ENCODE measurements at regions of chr12 and their contacts with region 1.

Region 1: DNA sequence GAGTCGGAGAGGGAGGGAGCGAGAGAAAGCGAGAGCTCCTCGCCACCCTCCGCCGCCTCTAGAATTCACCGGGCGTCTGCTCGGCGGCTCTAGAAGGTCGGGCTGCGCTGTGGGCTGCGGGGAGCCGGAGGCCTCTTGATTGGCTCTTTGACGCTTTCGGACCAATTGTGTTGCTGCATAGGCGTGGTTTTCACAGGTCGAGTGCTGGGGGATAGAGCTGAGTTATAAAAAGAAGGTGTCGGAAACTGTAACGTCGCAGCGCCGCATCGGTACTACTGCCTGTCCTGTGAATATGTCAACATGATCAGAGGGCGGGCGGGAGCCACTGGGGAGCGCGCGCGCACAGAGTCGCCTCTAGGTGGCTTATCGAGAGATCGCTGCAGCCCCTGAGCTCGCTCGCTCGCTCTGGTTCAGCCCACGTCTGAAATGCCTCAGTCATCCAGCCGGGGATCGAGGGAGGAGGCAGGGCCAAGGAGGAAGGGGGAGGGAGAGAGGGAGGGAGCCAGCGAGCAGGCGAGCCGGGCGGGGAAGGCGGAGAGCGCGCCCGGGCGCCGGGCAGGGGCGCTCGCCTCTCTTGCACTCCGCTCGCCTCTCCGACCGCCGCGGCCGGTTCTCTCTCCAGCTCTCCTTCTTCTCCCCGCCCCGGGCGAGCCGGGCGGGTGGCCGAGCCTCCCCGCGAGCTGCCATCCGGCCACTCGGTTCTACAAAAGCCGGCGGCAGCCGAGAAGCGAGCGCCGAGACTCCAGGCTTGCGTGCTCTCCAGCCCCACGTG is at the start of gene TBX3:
- DNase-seq: peak; percentile 98
- H3K4me3 ChIP-seq: peak within 1 kb of the TSS; percentile 96
- H3K27ac ChIP-seq: peak within 1 kb of the TSS; percentile 98
- H3K27me3 ChIP-seq: no peaks in the 10 kb centered on the region
- CTCF ChIP-seq: peak; percentile 63
- polyA plus RNA-seq, gene TBX3: 42.2 and 54.8 TPM in 2 replicates

Region 2: DNA sequence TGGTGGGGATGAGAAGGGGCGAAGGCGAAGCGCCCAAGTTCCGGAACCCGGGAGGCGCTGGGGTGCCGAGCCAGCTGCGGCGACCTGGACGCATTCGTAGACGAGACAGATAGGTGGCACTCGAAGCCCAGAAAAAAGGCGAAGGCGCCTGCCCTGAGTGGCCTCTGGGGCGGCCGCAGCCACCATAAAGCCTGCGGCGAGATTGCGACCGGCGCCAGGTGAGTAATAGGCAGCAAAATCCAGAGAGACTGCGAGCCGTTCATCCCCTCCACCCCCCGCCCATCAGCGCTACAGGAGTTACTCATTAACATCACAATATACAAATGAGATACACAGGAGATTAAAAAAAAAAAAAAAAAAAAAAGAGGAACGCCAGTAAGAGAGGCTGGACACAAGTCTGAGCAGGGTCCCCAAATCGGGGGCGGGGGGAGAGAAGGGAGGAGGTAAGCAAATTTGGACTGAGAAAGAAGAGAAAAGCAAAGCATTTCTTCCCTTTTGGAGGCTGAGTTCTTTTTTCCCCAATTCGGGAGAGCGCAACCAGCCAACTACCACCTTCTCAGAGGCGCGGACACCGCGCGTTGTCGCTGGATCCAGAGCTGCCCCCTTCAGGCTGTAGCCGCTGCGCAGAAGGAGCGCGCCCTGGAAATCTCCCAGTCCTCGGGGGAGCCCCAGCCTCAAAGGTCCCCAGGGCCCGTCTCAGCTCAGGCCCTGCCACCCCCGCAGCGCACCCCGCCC is 16.0 kb before region 1 on chr12:
- CTCF ChIA-PET with region 1: interaction called, 12 read pairs
- POLR2A ChIA-PET with region 1: interaction called, 138 read pairs
- DNase-seq: no peak
- H3K4me3 ChIP-seq: peak overlapping the region; percentile 59
- H3K27ac ChIP-seq: peak overlapping the region; percentile 95
- H3K27me3 ChIP-seq: no peaks in the 10 kb centered on the region
- CTCF ChIP-seq: peak; percentile 55

Region 3: GRCh38 chr12:114762490-114763110 is 78.3 kb after region 1 on chr12:
- CTCF ChIA-PET with region 1: interaction called, 4 read pairs
- POLR2A ChIA-PET with region 1: interaction called, 15 read pairs
- DNase-seq: peak; percentile 76
- H3K4me3 ChIP-seq: peak overlapping the region; percentile 25
- H3K27ac ChIP-seq: peak overlapping the region; percentile 49
- H3K27me3 ChIP-seq: no peaks in the 10 kb centered on the region
- CTCF ChIP-seq: no peak

Region 4: GRCh38 chr12:114812858-114813761 is 128.8 kb after region 1 on chr12:
- CTCF ChIA-PET with region 1: no interaction called
- POLR2A ChIA-PET with region 1: interaction called, 23 read pairs
- DNase-seq: peak; percentile 56
- H3K4me3 ChIP-seq: peak overlapping the region; percentile 31
- H3K27ac ChIP-seq: peak overlapping the region; percentile 83
- H3K27me3 ChIP-seq: no peaks in the 10 kb centered on the region
- CTCF ChIP-seq: no peak

Region 5: DNA sequence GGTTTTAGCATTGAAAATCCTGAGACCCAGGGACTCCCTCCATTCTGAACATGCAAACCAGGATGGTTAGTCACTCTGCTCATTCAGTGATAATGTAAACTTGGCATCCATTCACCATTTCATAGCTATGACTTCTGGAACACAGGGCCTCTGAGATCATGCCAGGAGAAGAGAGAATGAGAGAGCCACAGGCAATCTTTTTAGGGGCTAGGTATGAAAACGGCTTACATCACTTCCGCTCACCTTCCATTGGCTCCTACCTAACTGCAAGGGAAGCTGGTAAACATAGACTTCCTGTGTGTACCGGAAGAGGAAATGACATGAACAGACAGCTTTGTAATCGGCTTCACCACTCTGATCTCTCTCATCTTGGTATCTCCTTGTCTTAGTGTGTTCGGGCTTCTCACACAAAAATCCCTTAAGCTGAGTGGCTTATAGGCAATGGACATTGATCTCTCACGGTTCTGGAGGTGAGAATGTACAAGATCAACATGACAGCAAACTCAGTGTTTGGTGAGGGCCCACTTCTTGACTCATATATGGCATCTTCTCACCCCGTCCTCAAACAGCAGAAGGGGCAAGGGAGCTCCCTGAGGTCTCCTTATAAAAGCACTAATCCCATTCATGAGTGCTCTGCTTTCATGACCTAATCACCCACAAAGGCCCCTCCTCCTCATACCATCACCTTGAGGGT is 465.5 kb after region 1 on chr12:
- CTCF ChIA-PET with region 1: interaction called, 6 read pairs
- POLR2A ChIA-PET with region 1: interaction called, 15 read pairs
- DNase-seq: peak; percentile 95
- H3K4me3 ChIP-seq: no peak overlapping the region
- H3K27ac ChIP-seq: peak overlapping the region; percentile 97
- H3K27me3 ChIP-seq: no peaks in the 10 kb centered on the region
- CTCF ChIP-seq: no peak

Measured in AG04450 (cell line).